ENCODE measurements at regions of chr1 and their contacts with region 1.

Region 1: GRCh38 chr1:110203021-110203661 is 7.0 kb upstream of the KCNC4 start:
- DNase-seq: no peak
- ATAC-seq: peak; percentile 64 to 66
- H3K4me3 ChIP-seq: no peak overlapping the region
- H3K27ac ChIP-seq: no peak overlapping the region
- H3K4me1 ChIP-seq: no peaks in the 10 kb centered on the region
- H3K27me3 ChIP-seq: no peaks in the 10 kb centered on the region
- CTCF ChIP-seq: peak; percentile 73 to 90 (median 82)
- POLR2A ChIP-seq: no peak

Region 2: GRCh38 chr1:110155878-110156522 is 47.1 kb before region 1 on chr1:
- in situ Hi-C with region 1: no loop called
- intact Hi-C with region 1: no loop called
- DNase-seq: no peak
- ATAC-seq: no peak
- H3K4me3 ChIP-seq: no peak overlapping the region
- H3K27ac ChIP-seq: no peak overlapping the region
- H3K4me1 ChIP-seq: no peaks in the 10 kb centered on the region
- H3K27me3 ChIP-seq: peaks cover 13 to 22% (median 19%) of the 10 kb centered on the region in 3 donors
- CTCF ChIP-seq: no peak
- POLR2A ChIP-seq: no peak

Region 3: DNA sequence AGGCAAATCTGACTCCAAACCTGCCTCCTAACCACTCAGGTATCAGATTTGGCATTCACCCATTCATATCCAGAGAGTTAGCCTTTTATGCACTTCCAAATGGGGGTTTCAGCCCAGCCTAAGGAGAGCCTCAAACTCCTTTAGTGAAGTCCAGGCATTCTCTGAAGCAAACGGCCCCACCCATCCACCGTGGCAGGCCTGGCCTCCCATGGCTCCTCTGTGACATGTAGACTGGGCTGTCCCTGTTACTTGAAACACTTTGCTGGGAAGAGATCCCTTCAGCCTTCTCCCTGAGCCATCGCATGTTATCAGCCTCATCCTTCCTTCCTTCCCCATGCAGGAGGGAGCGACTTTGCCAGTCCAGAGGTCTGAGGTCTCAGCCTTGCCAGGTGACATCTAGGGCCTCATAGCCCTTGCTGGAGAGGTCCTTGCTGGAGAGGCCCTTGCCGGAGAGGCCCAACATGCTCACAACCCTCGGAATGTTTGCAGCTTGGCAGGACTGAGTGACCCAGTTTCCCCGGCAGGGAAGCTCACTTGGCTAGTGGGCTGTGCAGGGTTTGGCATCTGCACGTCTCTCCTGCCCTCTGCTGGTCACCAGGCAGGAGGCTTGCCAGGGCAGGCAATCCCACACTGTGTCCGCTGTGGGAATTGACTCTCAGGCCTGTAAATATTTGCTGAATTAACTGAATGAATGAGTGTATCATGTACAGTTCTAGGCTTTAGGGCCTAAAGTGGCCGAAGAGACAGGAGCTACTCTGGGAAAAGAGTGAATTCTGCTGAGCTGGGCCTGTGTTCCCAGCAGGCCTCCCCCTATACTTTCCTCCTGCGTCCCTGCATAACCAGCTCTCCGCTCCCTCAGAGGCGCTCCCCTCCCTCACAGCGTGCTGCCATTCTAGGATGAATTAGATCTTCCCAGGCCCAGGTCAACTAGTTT is 109.3 kb after region 1 on chr1:
- in situ Hi-C with region 1: loop called (anchors 5 kb)
- intact Hi-C with region 1: loop called (anchors 1 kb)
- DNase-seq: peak; percentile 58 to 66
- ATAC-seq: peak; percentile 92 to 95
- H3K4me3 ChIP-seq: no peak overlapping the region
- H3K27ac ChIP-seq: no peak overlapping the region
- H3K4me1 ChIP-seq: peaks cover 4 to 5% of the 10 kb centered on the region in 2 donors
- H3K27me3 ChIP-seq: no peaks in the 10 kb centered on the region
- CTCF ChIP-seq: peak; percentile 76 to 95 (median 90)
- POLR2A ChIP-seq: no peak

Region 4: GRCh38 chr1:110455151-110455550 is 252.0 kb after region 1 on chr1:
- in situ Hi-C with region 1: loop called (anchors 5 kb)
- intact Hi-C with region 1: loop called (anchors 1 kb)
- DNase-seq: no peak
- ATAC-seq: no peak
- H3K4me3 ChIP-seq: no peak overlapping the region
- H3K27ac ChIP-seq: no peak overlapping the region
- H3K4me1 ChIP-seq: no peaks in the 10 kb centered on the region
- H3K27me3 ChIP-seq: peaks cover 0 to 3% (median 0%) of the 10 kb centered on the region in 3 donors
- CTCF ChIP-seq: no peak
- POLR2A ChIP-seq: no peak

Region 5: GRCh38 chr1:110460253-110461220 is 257.4 kb after region 1 on chr1:
- in situ Hi-C with region 1: loop called (anchors 5 kb)
- intact Hi-C with region 1: loop called (anchors 1 kb)
- DNase-seq: peak; percentile 54 to 68
- ATAC-seq: peak; percentile 93 to 95
- H3K4me3 ChIP-seq: no peak overlapping the region
- H3K27ac ChIP-seq: no peak overlapping the region
- H3K4me1 ChIP-seq: no peaks in the 10 kb centered on the region
- H3K27me3 ChIP-seq: no peaks in the 10 kb centered on the region
- CTCF ChIP-seq: peak; percentile 89 to 96 (median 94)
- POLR2A ChIP-seq: no peak

Region 6: DNA sequence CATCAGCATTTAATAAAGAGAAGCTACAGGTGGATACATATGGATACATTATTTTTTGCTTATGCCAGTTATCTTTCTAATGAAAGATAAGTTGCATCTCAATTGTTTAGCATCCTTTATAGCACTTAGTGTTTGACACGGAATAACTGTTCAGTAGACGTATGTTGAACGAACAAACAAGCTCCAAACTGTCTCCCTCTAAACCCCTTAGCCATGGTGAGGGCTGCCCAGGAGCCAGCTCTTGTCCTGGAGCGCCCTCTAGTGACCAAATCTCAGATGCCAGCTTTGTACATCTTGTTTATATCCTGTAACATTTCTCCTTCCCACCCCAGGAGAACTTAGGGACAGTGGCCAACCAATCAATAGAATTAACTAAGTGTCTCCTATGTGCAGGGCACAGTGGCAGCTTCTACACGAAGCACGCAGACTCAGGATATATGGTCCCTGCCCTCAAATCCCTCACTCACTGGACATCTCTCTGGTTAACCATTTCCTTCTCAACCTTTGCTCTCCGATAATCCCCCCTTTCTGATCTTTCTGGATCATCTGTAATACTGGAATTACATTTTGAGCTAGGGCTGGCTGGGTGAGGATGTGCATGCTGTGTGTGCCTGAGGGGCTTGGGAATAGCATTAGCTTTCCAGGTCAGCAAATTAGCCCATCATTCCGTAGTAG is 292.9 kb after region 1 on chr1:
- in situ Hi-C with region 1: loop called in 1 of 4 experiments (anchors 10 kb)
- intact Hi-C with region 1: loop called (anchors 2 kb)
- DNase-seq: peak; percentile 53 to 58
- ATAC-seq: peak; percentile 80 to 92
- H3K4me3 ChIP-seq: no peak overlapping the region
- H3K27ac ChIP-seq: no peak overlapping the region
- H3K4me1 ChIP-seq: no peaks in the 10 kb centered on the region
- H3K27me3 ChIP-seq: no peaks in the 10 kb centered on the region
- CTCF ChIP-seq: peak; percentile 70 to 93 (median 81)
- POLR2A ChIP-seq: no peak